ENCODE measurements at regions of chr3 and their contacts with region 1.

Region 1: DNA sequence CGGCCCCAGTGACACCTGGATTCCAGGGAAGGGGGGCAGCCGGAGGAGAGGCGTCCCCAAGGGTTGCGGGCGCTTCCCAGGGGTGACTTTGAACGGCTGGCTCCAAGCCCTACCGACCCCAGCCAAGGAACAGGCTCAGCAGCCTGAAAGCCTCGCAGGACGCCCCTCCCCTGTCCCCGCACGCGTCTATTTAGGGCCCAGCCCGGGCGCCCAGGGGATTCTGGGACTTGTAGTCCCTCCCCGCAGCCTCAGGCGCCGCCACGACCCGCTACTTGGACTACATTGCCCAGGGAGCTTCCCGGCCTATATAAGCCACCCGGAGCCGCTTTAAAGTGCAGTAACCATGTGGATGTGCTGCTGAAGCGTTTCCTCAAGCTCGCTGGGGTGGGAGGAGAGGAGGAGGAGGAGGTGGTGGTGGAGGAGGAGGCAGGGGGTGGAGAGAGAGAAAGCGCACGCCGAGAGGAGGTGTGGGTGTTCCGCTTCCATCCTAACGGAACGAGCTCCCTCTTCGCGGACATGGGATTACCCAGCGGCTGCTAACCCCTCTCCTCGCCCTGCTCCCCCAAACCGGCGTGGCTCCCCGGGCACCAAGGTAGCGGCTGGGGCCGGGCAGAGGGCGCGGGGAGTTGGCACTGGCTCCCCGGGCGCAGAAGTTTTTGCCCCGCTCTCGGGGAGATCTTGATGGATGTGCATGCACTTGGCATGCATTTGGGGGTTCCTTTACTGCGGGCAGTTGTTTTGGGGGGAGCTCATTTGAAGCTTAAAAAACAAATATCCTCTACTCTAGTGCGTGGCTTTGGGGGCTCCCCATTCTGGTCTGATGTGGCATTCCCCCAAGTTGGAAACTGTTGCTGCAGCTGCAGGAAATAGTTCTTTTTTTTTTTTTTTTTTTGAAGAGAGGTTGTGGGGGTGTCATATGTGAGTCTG is at the start of gene ITPR1:
- DNase-seq: peak; percentile 91 to 99 (median 98)
- H3K4me3 ChIP-seq: peak within 1 kb of the TSS; percentile 65 to 100 (median 92)
- H3K27ac ChIP-seq: peak within 1 kb of the TSS in 56 of 59 donors; percentile 8 to 95 (median 81)
- H3K27me3 ChIP-seq: no peaks in the 10 kb centered on the region
- CTCF ChIP-seq: peak in 26 of 56 donors; percentile 9 to 45 (median 20)
- total RNA-seq, gene ITPR1: 93.6 to 417 (median 307) TPM

Region 2: GRCh38 chr3:4303187-4304123 is 189.8 kb before region 1 on chr3 and contains the start of gene SETMAR:
- intact Hi-C with region 1: loop called in 1 of 2 experiments (anchors 10 kb)
- DNase-seq: peak; percentile 88 to 95 (median 93)
- H3K4me3 ChIP-seq: peak within 1 kb of the TSS; percentile 52 to 96 (median 81)
- H3K27ac ChIP-seq: peak within 1 kb of the TSS; percentile 64 to 99 (median 92)
- H3K27me3 ChIP-seq: no peaks in the 10 kb centered on the region
- CTCF ChIP-seq: peak in 31 of 56 donors; percentile 6 to 62 (median 25)
- total RNA-seq, gene SETMAR: 12.0 to 32.4 (median 18.2) TPM

Region 3: DNA sequence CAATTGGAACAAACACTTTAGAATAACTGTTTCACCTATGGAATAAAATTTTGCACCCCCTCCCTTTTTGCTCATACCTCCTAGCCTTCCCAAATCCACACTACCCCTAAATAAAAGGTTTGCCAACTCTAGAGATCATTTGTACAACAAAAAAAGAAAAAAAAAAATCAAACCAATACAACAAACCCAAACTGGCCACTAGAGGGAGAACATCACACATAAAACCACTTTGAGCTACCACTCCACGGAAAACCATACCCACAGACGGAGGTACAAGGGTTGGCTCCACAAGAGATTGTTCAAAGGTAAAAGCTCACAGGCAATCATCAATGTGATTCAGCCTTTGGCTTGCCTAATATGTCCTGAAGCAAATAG is 142.5 kb before region 1 on chr3:
- intact Hi-C with region 1: loop called in 1 of 2 experiments (anchors 5 kb)
- DNase-seq: peak in 2 of 10 donors; percentile 34 to 45
- H3K4me3 ChIP-seq: peak overlapping the region in 26 of 59 donors; percentile 1 to 48 (median 22)
- H3K27ac ChIP-seq: peak overlapping the region in 24 of 59 donors; percentile 8 to 69 (median 36)
- H3K27me3 ChIP-seq: no peaks in the 10 kb centered on the region
- CTCF ChIP-seq: peak; percentile 74 to 96 (median 84)

Region 4: DNA sequence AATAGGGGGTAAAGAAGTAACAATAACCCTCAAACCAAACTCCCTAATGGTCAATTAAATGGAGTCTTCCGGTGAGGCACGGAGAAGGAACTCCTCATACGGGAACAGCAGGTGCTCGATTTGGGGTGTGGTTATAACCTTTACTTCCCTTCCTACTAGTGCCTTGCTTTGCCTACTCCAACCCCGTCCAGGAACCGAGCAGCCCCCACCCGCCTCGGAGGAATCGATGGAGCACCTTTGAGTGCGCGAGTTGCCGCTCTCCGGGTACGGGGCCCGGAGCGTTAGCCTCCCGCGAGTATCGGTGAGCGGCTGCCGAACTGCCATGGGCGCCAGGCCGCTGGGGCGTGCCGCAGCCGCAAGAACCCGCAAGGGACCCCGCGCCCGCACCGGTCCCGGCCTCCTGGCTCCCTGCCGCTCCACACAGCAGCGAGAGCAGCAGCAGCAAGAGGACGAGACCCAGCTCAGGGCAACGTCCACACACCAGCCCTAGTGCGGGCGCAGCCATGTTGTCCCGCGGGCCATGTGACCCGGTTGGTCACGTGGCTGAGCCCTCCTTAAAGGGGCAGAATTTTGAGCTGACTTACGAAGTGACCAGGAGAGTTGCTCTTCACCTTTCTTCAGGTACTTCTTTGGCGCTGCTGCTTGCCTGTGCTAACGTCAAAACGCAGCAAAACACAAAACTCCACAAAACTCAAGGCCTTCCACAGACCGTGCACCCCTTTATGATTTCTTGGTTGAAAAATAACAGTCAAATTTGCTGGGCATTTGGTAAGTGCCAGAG is 26.3 kb before region 1 on chr3 and contains the start of gene SUMF1:
- intact Hi-C with region 1: loop called in 1 of 2 experiments (anchors 2 kb)
- DNase-seq: peak; percentile 82 to 93 (median 89)
- H3K4me3 ChIP-seq: peak within 1 kb of the TSS; percentile 66 to 100 (median 92)
- H3K27ac ChIP-seq: peak within 1 kb of the TSS; percentile 5 to 91 (median 79)
- H3K27me3 ChIP-seq: no peaks in the 10 kb centered on the region
- CTCF ChIP-seq: peak in 20 of 56 donors; percentile 7 to 37 (median 27)
- total RNA-seq, gene SUMF1: 12.4 to 26.6 (median 17.6) TPM

Region 5: DNA sequence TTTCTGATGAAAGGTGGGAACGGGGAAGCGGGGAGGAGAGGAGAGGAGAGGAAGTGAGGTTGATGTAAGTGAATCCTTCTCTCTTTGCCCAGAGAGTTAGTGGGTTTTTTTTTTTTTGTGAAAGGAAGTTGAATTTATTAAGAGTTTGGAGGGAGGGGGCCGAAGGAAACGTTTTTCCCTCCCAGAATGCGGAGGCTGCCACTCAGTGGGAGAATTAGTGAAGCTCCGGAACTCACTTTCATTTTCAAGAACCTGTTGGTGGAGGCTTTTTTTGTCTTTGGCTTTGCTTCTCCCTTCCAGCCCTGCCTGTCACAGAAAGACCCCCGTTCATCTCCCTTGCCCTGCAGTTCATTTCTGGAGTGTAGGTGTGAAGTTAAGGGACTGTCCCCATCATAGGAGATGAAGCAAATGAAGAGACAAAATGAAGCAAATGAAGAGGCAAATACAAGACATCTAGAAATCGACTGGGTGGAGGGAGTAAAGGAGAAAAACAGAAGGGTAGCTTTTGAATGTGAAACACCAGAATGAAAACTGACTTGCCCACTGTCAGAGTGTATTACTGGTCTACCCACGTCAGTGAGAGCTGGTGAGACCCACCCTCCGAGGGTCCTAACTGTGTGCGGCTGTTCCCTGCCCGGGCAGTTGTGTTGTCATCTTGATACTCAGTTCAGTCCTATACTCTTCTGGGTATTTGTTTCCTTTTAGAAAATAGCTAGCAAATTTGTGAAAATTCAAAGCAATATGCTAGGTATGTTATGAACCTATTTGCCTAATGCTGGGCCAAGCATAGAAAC is 91.4 kb after region 1 on chr3:
- intact Hi-C with region 1: loop called in 1 of 2 experiments (anchors 5 kb)
- DNase-seq: no peak
- H3K4me3 ChIP-seq: peak overlapping the region in 53 of 59 donors; percentile 3 to 61 (median 36)
- H3K27ac ChIP-seq: peak overlapping the region in 49 of 59 donors; percentile 8 to 87 (median 69)
- H3K27me3 ChIP-seq: no peaks in the 10 kb centered on the region
- CTCF ChIP-seq: peak in 22 of 56 donors; percentile 6 to 44 (median 26)

Region 6: GRCh38 chr3:4633078-4634004 is 140.1 kb after region 1 on chr3:
- intact Hi-C with region 1: no loop called
- DNase-seq: no peak
- H3K4me3 ChIP-seq: no peak overlapping the region
- H3K27ac ChIP-seq: no peak overlapping the region
- H3K27me3 ChIP-seq: no peaks in the 10 kb centered on the region
- CTCF ChIP-seq: peak; percentile 65 to 93 (median 84)

Region 7: GRCh38 chr3:5122030-5122740 is 628.9 kb after region 1 on chr3 and contains the start of gene ARL8B:
- intact Hi-C with region 1: loop called in 1 of 2 experiments (anchors 5 kb)
- DNase-seq: peak; percentile 85 to 95 (median 90)
- H3K4me3 ChIP-seq: peak within 1 kb of the TSS; percentile 63 to 100 (median 99)
- H3K27ac ChIP-seq: peak within 1 kb of the TSS; percentile 53 to 99 (median 89)
- H3K27me3 ChIP-seq: no peaks in the 10 kb centered on the region
- CTCF ChIP-seq: peak; percentile 94 to 100 (median 99)
- total RNA-seq, gene ARL8B: 66.6 to 154 (median 120) TPM

Measured in dorsolateral prefrontal cortex (tissue), 120 donors.